Heart right ventricle (tissue), 16 donors: ENCODE measurements at regions of chr12 and their contacts with region 1.

Region 1: DNA sequence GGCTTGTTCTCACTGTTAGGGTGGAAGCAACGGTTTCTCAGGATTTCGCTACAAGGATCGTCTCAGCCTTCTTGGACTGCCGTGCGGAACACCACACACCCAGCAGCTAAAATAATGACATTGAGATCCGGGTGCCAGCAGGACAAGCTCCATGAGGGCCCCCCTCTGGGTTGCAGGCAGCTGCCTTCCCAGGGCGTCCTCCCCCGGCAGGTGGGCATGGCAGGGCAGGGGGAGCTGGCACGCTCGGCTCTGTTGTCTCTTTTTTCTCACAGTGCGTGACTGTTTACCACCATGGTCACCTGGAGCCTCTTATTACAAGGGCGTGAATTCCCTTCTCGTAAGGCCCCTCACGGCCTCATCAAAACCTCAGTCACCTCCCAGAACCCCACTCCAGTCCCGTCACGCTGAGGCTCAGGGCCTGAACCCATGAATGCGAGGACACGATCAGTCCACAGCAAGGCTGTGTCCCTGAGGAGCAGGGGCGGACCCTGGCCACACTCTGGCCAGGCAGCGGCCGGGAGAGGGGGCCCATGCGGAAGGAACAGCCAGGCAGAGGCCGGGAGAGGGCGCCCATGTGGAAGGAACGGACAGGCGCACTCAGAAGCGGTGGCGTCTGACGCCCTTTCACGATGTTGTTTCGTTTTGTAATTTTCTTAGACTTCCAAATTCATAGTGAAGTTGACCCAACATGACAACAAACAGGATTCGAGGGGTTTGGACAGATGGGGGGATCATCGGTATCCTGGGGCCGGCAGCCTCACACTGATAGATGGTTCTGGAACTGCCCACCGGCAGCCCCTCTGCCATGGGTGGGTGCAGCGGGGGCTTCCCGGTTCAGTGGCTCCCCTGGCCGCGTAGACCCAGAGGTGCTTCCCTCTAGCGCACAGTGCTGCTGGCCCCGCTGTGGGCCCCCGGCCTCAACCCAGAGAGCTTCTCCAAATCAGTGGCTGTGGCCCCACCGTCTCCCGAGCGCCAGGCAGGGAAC is 10.0 kb downstream of the LRCOL1 start:
- DNase-seq: peak; percentile 62 to 76
- ATAC-seq: peak; percentile 56 to 76 (median 69)
- H3K4me3 ChIP-seq: peak overlapping the region; percentile 22 to 61 (median 48)
- H3K27ac ChIP-seq: peak overlapping the region in 6 of 10 donors; percentile 5 to 65 (median 20)
- H3K4me1 ChIP-seq: peaks cover 0 to 54% (median 27%) of the 10 kb centered on the region in 9 donors
- H3K27me3 ChIP-seq: peaks cover 0 to 62% (median 27%) of the 10 kb centered on the region in 7 donors
- CTCF ChIP-seq: peak; percentile 31 to 81 (median 63)

Region 2: DNA sequence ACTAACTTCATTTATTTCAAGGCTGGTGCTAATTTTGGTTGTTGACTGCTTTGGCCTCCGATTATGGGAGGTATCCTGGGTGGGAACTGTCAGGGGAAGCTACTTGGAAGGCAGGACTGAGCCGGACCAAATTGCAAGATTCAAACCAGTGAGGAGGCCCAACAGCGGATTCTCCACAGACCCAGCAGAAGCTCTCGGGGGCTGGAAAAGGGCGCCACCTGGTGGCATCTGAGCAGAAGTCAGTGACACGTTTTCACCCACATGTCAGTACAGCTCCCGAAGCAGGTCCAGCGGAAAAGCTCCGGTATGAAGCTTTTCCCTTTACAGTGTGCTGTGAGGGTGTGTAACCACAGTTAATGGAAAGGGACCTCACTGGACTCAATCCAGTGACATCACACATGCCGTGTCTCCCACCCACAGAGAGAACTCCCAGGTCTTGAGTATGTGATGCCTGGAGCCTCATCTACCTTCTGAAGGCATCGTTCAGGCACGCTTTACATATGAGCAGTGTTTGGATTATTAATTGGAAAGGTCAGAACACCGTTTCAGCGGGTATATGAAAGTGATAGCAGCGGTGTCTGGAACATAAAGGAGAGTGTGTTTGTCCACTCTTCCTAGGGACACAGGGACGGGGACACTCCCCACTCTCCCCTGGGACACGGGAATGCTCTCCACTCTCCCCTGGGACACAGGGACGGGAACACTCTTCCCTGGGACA is 14.7 kb after region 1 on chr12:
- intact Hi-C with region 1: loop called in 2 of 10 experiments (anchors 1 to 2 kb)
- DNase-seq: peak; percentile 83 to 85
- ATAC-seq: peak; percentile 77 to 95 (median 90)
- H3K4me3 ChIP-seq: no peak overlapping the region
- H3K27ac ChIP-seq: no peak overlapping the region
- H3K4me1 ChIP-seq: peaks cover 0 to 12% (median 9%) of the 10 kb centered on the region in 9 donors
- H3K27me3 ChIP-seq: peaks cover 27 to 71% (median 62%) of the 10 kb centered on the region in 7 donors
- CTCF ChIP-seq: peak; percentile 79 to 95 (median 90)